ENCODE measurements at regions of chr10 and their contacts with region 1.

Region 1: GRCh38 chr10:22580711-22581110 is 133.7 kb downstream of the PIP4K2A start:
- DNase-seq: no peak
- H3K4me3 Mint-ChIP-seq: no peak overlapping the region
- H3K27ac Mint-ChIP-seq: no peak overlapping the region
- H3K4me1 Mint-ChIP-seq: no peaks in the 10 kb centered on the region
- H3K27me3 Mint-ChIP-seq: no peaks in the 10 kb centered on the region
- CTCF ChIP-seq: no peak

Region 2: GRCh38 chr10:22325272-22326144 is 255.2 kb before region 1 on chr10:
- CTCF ChIA-PET with region 1: no interaction called
- POLR2A ChIA-PET with region 1: no interaction called
- intact Hi-C with region 1: loop called (anchors 10 kb)
- DNase-seq: peak; percentile 64
- H3K4me3 Mint-ChIP-seq: peak overlapping the region; percentile 80
- H3K27ac Mint-ChIP-seq: peak overlapping the region; percentile 31
- H3K4me1 Mint-ChIP-seq: peaks cover 29% of the 10 kb centered on the region
- H3K27me3 Mint-ChIP-seq: peaks cover 11% of the 10 kb centered on the region
- CTCF ChIP-seq: no peak

Region 3: DNA sequence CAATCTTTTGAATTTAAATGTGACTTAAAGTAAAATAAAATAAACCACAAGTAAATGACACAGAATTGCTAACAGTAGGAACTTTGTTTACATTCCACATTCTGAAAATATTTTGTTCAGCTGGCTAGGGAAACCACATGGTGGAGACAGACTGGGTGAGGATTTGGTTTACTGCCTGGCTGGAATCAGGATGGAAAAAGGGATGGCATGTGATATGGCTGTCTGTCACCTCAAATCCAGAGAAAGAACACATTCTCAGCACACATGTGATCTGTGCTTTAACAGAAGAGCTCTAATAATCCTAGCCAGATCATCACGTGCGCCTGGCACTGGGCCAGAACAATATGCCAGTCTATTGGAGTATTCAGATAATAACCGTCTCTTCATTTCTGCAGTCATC is 224.6 kb after region 1 on chr10:
- CTCF ChIA-PET with region 1: no interaction called
- POLR2A ChIA-PET with region 1: no interaction called
- intact Hi-C with region 1: no loop called
- DNase-seq: no peak
- H3K4me3 Mint-ChIP-seq: no peak overlapping the region
- H3K27ac Mint-ChIP-seq: no peak overlapping the region
- H3K4me1 Mint-ChIP-seq: peaks cover 21% of the 10 kb centered on the region
- H3K27me3 Mint-ChIP-seq: no peaks in the 10 kb centered on the region
- CTCF ChIP-seq: no peak

Measured in MCF 10A (cell line).